CD8-positive, alpha-beta T cell (primary cell): ENCODE measurements at regions of chr12 and their contacts with region 1.

Region 1: GRCh38 chr12:9707864-9708808 is 24.8 kb downstream of the CLECL1 start:
- DNase-seq: peak; percentile 47 to 88 (median 73)
- ATAC-seq: peak; percentile 89
- H3K4me3 ChIP-seq: peak overlapping the region; percentile 5 to 21
- H3K4me3 Mint-ChIP-seq: peak overlapping the region; percentile 73
- H3K27ac ChIP-seq: peak overlapping the region; percentile 19 to 75
- H3K27ac Mint-ChIP-seq: peak overlapping the region; percentile 95
- H3K4me1 ChIP-seq: peaks cover 37% of the 10 kb centered on the region
- H3K4me1 Mint-ChIP-seq: peaks cover 62% of the 10 kb centered on the region
- H3K27me3 ChIP-seq: no peaks in the 10 kb centered on the region
- H3K27me3 Mint-ChIP-seq: no peaks in the 10 kb centered on the region
- CTCF ChIP-seq: peak; percentile 70

Region 2: DNA sequence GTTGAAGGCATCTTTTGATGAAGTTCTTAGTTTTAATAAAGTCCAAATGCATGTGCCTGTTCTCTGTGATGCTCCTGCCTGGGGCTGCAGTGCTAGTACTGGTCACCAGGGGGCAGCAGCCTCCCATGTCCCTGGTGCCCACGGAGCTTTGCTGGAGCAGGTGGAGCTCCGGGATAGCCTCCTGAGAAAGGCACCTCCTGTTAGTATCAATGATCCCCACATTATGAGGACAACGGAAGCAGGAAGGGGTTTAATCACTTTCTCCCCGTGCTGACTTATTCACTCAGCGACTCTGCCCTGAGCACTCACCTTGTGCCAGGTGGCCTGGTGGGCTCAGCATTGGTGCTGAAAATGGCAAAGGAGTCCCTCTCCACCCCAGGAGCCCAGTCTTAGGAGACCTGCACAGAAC is 376.9 kb before region 1 on chr12:
- CTCF ChIA-PET with region 1: interaction called, 3 read pairs
- POLR2A ChIA-PET with region 1: no interaction called
- intact Hi-C with region 1: loop called (anchors 1 kb)
- DNase-seq: peak; percentile 45 to 82 (median 71)
- ATAC-seq: peak; percentile 81
- H3K4me3 ChIP-seq: no peak overlapping the region
- H3K4me3 Mint-ChIP-seq: no peak overlapping the region
- H3K27ac ChIP-seq: no peak overlapping the region
- H3K27ac Mint-ChIP-seq: no peak overlapping the region
- H3K4me1 ChIP-seq: peaks cover 17% of the 10 kb centered on the region
- H3K4me1 Mint-ChIP-seq: peaks cover 23% of the 10 kb centered on the region
- H3K27me3 ChIP-seq: no peaks in the 10 kb centered on the region
- H3K27me3 Mint-ChIP-seq: no peaks in the 10 kb centered on the region
- CTCF ChIP-seq: peak; percentile 94

Region 3: GRCh38 chr12:9626291-9626690 is 81.8 kb before region 1 on chr12:
- CTCF ChIA-PET with region 1: interaction called, 19 read pairs
- POLR2A ChIA-PET with region 1: interaction called, 8 read pairs
- intact Hi-C with region 1: no loop called
- DNase-seq: no peak
- ATAC-seq: no peak
- H3K4me3 ChIP-seq: no peak overlapping the region
- H3K4me3 Mint-ChIP-seq: no peak overlapping the region
- H3K27ac ChIP-seq: no peak overlapping the region
- H3K27ac Mint-ChIP-seq: no peak overlapping the region
- H3K4me1 ChIP-seq: no peaks in the 10 kb centered on the region
- H3K4me1 Mint-ChIP-seq: peaks cover 8% of the 10 kb centered on the region
- H3K27me3 ChIP-seq: no peaks in the 10 kb centered on the region
- H3K27me3 Mint-ChIP-seq: no peaks in the 10 kb centered on the region
- CTCF ChIP-seq: no peak

Region 4: GRCh38 chr12:9642606-9643265 is 65.4 kb before region 1 on chr12:
- CTCF ChIA-PET with region 1: interaction called, 145 read pairs
- POLR2A ChIA-PET with region 1: interaction called, 27 read pairs
- intact Hi-C with region 1: no loop called
- DNase-seq: no peak
- ATAC-seq: no peak
- H3K4me3 ChIP-seq: peak overlapping the region in 1 of 2 experiments; percentile 14
- H3K4me3 Mint-ChIP-seq: peak overlapping the region; percentile 13
- H3K27ac ChIP-seq: peak overlapping the region in 1 of 2 experiments; percentile 29
- H3K27ac Mint-ChIP-seq: peak overlapping the region; percentile 87
- H3K4me1 ChIP-seq: peaks cover 56% of the 10 kb centered on the region
- H3K4me1 Mint-ChIP-seq: peaks cover 72% of the 10 kb centered on the region
- H3K27me3 ChIP-seq: no peaks in the 10 kb centered on the region
- H3K27me3 Mint-ChIP-seq: no peaks in the 10 kb centered on the region
- CTCF ChIP-seq: no peak

Region 5: DNA sequence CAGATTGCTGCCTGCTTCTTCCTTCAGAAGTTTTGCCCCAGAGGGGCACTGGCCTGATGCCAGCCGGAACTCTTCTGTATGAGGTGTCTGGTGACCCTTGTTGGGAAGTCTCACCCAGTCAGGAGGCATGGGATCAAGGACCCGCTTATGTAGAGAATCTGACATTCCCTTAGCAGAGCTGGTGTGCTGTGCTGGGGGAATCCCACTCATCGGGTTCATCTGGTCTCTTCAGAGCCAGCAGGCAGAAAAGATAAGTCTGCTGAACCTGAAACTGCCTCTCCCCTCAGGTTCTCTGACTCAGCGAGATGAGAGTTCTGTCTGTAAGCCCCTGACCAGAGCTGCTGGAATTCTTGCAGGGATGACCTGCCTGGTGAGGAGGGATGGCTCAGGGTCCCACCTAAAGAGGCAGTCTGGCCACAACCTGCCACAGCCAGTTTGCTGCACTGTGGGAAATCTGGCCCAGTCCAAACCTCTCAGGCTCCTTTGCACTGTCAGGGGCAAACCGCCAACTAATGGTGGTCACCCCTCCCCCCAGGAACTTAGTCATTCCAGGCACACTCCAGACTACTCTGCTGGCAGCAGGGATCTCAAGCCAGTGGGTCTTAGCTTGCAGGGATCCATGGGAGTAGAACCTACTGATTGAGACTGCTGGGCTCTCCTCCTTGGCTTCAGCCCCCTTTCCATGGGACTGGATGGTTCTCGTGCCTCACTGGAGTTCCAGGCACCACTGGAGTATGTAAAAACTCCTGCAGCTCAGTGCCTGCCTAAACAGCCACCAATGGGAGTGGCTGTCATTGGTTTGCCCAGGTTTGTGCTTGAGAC is 34.5 kb before region 1 on chr12:
- CTCF ChIA-PET with region 1: interaction called, 15 read pairs
- POLR2A ChIA-PET with region 1: interaction called, 13 read pairs
- intact Hi-C with region 1: loop called (anchors 2 to 5 kb)
- DNase-seq: peak in 7 of 9 experiments; percentile 44 to 82 (median 63)
- ATAC-seq: peak; percentile 37
- H3K4me3 ChIP-seq: peak overlapping the region; percentile 50 to 68
- H3K4me3 Mint-ChIP-seq: peak overlapping the region; percentile 88
- H3K27ac ChIP-seq: peak overlapping the region; percentile 42 to 74
- H3K27ac Mint-ChIP-seq: peak overlapping the region; percentile 95
- H3K4me1 ChIP-seq: peaks cover 44% of the 10 kb centered on the region
- H3K4me1 Mint-ChIP-seq: peaks cover 76% of the 10 kb centered on the region
- H3K27me3 ChIP-seq: no peaks in the 10 kb centered on the region
- H3K27me3 Mint-ChIP-seq: no peaks in the 10 kb centered on the region
- CTCF ChIP-seq: no peak

Region 6: GRCh38 chr12:9741726-9742125 is 33.6 kb after region 1 on chr12:
- CTCF ChIA-PET with region 1: interaction called, 32 read pairs
- POLR2A ChIA-PET with region 1: interaction called, 5 read pairs
- intact Hi-C with region 1: loop called (anchors 2 to 5 kb)
- DNase-seq: peak; percentile 44 to 95 (median 67)
- ATAC-seq: peak; percentile 59
- H3K4me3 ChIP-seq: peak overlapping the region; percentile 13 to 19
- H3K4me3 Mint-ChIP-seq: peak overlapping the region; percentile 77
- H3K27ac ChIP-seq: peak overlapping the region; percentile 63 to 68
- H3K27ac Mint-ChIP-seq: peak overlapping the region; percentile 97
- H3K4me1 ChIP-seq: peaks cover 60% of the 10 kb centered on the region
- H3K4me1 Mint-ChIP-seq: peaks cover 67% of the 10 kb centered on the region
- H3K27me3 ChIP-seq: no peaks in the 10 kb centered on the region
- H3K27me3 Mint-ChIP-seq: no peaks in the 10 kb centered on the region
- CTCF ChIP-seq: no peak

Region 7: GRCh38 chr12:10260927-10261326 is 552.8 kb after region 1 on chr12:
- CTCF ChIA-PET with region 1: no interaction called
- POLR2A ChIA-PET with region 1: no interaction called
- intact Hi-C with region 1: no loop called
- DNase-seq: no peak
- ATAC-seq: no peak
- H3K4me3 ChIP-seq: no peak overlapping the region
- H3K4me3 Mint-ChIP-seq: no peak overlapping the region
- H3K27ac ChIP-seq: no peak overlapping the region
- H3K27ac Mint-ChIP-seq: no peak overlapping the region
- H3K4me1 ChIP-seq: no peaks in the 10 kb centered on the region
- H3K4me1 Mint-ChIP-seq: no peaks in the 10 kb centered on the region
- H3K27me3 ChIP-seq: no peaks in the 10 kb centered on the region
- H3K27me3 Mint-ChIP-seq: no peaks in the 10 kb centered on the region
- CTCF ChIP-seq: no peak